Psoas muscle (tissue), 8 donors: ENCODE measurements at regions of chr19 and their contacts with region 1.

Region 1: GRCh38 chr19:32971715-32972540 is at the starts of genes CEP89 and FAAP24:
- DNase-seq: peak; percentile 96 to 98
- ATAC-seq: peak; percentile 99 to 100 (median 100)
- H3K4me3 ChIP-seq: peak within 1 kb of the TSS; percentile 79
- H3K27ac ChIP-seq: peak within 1 kb of the TSS; percentile 58
- H3K4me1 ChIP-seq: peaks cover 6% of the 10 kb centered on the region
- H3K27me3 ChIP-seq: no peaks in the 10 kb centered on the region
- CTCF ChIP-seq: no peak
- total RNA-seq, gene CEP89: 9.8 to 11.9 (median 10.5) TPM
- total RNA-seq, gene FAAP24: 0.12 to 0.58 (median 0.23) TPM in 3 of 4 donors, not detected in the other

Region 2: DNA sequence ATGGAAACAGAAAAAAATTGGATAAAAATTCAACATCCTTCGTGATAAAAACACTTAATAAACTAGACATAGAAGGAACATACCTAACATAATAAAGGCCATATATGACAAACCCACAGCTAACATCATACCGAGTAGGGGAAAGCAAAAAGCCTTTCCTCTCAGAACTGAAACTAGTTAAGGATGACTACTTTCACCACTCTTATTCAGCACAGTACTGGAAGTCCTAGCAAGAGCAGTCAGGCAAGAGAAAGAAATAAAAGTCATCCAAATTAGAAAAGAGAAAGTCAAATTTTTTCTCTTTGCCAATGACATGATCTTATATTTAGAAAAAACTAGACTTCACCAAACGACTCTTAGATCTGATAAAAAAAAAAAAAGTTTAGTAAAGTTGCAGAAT is 76.5 kb before region 1 on chr19:
- intact Hi-C with region 1: no loop called
- DNase-seq: no peak
- ATAC-seq: no peak
- H3K4me3 ChIP-seq: no peak overlapping the region
- H3K27ac ChIP-seq: no peak overlapping the region
- H3K4me1 ChIP-seq: no peaks in the 10 kb centered on the region
- H3K27me3 ChIP-seq: no peaks in the 10 kb centered on the region
- CTCF ChIP-seq: no peak

Region 3: DNA sequence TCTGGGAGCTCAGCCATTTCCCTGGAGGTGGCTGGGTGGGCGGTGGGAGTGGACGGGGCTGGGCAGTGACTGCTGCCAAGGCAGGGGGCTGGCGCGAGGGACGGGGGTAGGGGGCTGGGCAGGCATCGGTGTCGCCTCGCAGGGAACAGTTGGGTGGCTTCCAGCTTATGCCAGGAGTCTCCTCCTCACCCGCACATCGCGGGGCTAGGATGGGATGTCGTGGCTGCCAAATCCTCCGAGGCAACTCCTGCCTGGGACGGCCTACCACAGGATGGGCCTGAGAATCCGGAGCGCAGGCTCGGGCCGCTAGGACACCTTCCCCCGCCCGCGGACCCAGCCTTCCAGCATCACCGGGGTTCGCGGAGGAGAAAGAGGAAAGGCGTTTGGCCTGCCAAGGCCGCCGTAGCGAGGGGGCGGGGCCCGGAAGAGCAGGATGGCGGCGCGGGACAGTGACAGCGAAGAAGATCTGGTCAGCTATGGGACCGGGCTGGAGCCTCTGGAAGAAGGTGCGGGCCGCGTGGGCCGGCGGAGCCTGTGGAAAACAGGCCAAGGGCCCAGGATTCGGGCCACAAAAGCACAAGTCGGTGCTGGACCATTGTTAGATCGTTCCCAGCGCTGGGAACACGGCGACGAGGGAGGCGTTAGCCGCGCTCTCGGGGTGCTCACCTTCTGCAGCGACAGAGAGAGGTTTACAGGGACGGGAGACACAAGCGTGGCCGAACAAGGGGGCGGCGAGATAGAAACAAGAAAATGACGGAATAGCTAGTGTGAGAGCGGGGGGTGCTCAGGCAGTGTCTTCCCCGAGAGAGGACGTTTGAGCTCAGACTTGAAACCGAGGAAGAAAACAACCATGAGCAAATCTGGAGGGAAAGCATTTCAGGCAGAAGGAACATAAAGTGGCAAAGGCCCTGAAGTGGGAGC is 109.1 kb after region 1 on chr19 and contains the start of gene GPATCH1:
- intact Hi-C with region 1: loop called in 1 of 2 experiments (anchors 5 kb)
- DNase-seq: peak; percentile 92
- ATAC-seq: peak; percentile 88 to 99 (median 96)
- H3K4me3 ChIP-seq: peak within 1 kb of the TSS; percentile 94
- H3K27ac ChIP-seq: peak within 1 kb of the TSS; percentile 81
- H3K4me1 ChIP-seq: peaks cover 21% of the 10 kb centered on the region
- H3K27me3 ChIP-seq: no peaks in the 10 kb centered on the region
- CTCF ChIP-seq: no peak
- total RNA-seq, gene GPATCH1: 3.1 to 7.5 (median 5.6) TPM

Region 4: GRCh38 chr19:33125929-33126388 is 154.0 kb after region 1 on chr19:
- intact Hi-C with region 1: loop called in 1 of 2 experiments (anchors 5 kb)
- DNase-seq: peak in 1 of 2 donors; percentile 61
- ATAC-seq: peak; percentile 68 to 89 (median 77)
- H3K4me3 ChIP-seq: no peak overlapping the region
- H3K27ac ChIP-seq: no peak overlapping the region
- H3K4me1 ChIP-seq: no peaks in the 10 kb centered on the region
- H3K27me3 ChIP-seq: no peaks in the 10 kb centered on the region
- CTCF ChIP-seq: peak; percentile 78

Region 5: DNA sequence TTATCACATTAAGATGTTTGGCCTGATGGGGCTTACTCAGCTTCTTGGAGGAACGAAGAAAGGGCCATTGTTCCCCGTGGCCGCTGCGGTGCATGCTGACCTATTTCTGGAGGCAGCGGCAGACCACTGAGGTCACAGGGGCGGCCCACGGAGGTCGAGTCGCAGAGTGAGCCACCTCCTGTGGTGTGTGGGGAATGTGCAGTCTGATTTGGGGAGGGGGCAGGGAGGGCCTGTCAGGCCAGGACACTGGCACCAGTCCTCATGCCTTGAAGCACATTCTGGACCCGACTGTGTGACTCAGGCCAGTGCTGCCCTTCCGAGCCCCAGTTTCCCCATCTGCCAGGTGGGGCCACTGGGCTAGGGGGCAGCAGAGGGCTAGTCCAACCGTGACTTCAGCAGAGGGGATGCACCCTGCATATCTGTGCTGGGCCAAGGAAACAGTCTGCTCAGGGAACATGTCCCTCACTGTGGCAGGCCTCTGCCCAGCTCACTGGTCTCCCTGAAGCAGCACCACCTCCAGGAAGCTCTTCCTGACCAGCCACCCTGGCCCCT is 247.4 kb after region 1 on chr19:
- intact Hi-C with region 1: no loop called
- DNase-seq: no peak
- ATAC-seq: no peak
- H3K4me3 ChIP-seq: no peak overlapping the region
- H3K27ac ChIP-seq: no peak overlapping the region
- H3K4me1 ChIP-seq: no peaks in the 10 kb centered on the region
- H3K27me3 ChIP-seq: peaks cover 0 to 9% (median 2%) of the 10 kb centered on the region in 3 donors
- CTCF ChIP-seq: no peak